ENCODE measurements at regions of chrX and their contacts with region 1.

Region 1: DNA sequence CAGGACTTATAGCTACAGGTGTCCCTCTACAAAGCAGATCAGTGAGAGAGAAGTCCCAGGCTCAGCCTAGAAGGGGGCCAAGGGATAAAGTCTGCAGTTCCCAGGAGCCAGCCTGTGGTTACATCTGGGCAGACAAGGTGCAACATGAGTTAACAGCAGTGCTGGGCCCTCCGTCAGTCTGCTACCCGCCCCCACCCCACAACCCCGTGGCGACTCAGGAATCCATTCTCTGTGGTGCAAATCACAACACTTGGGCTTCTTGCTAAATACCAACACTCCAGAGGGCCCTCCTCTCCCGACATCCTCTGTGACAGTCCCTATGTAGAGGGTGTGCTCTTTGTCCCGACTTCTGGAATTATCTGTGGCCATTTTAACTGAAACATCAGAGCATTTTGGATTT is 13.8 kb downstream of the GPM6B start:
- DNase-seq: no peak
- H3K4me3 ChIP-seq: no peak overlapping the region
- H3K27ac ChIP-seq: no peak overlapping the region
- H3K4me1 ChIP-seq: no peaks in the 10 kb centered on the region
- H3K27me3 ChIP-seq: no peaks in the 10 kb centered on the region
- CTCF ChIP-seq: no peak

Region 2: GRCh38 chrX:13750204-13750603 is 52.9 kb before region 1 on chrX:
- intact Hi-C with region 1: loop called (anchors 5 kb)
- DNase-seq: no peak
- H3K4me3 ChIP-seq: no peak overlapping the region
- H3K27ac ChIP-seq: no peak overlapping the region
- H3K4me1 ChIP-seq: no peaks in the 10 kb centered on the region
- H3K27me3 ChIP-seq: no peaks in the 10 kb centered on the region
- CTCF ChIP-seq: peak; percentile 51 to 57